ENCODE measurements at regions of chr6 and their contacts with region 1.

Region 1: GRCh38 chr6:36912586-36912985 is 26.8 kb downstream of the C6orf89 start:
- DNase-seq: peak; percentile 3 to 82 (median 48)
- ATAC-seq: peak; percentile 85
- H3K4me3 ChIP-seq: peak overlapping the region; percentile 15 to 16
- H3K4me3 Mint-ChIP-seq: peak overlapping the region; percentile 63
- H3K27ac ChIP-seq: peak overlapping the region; percentile 13 to 70
- H3K27ac Mint-ChIP-seq: peak overlapping the region; percentile 83
- H3K4me1 ChIP-seq: peaks cover 20% of the 10 kb centered on the region
- H3K4me1 Mint-ChIP-seq: peaks cover 26% of the 10 kb centered on the region
- H3K27me3 ChIP-seq: no peaks in the 10 kb centered on the region
- H3K27me3 Mint-ChIP-seq: no peaks in the 10 kb centered on the region
- CTCF ChIP-seq: no peak

Region 2: DNA sequence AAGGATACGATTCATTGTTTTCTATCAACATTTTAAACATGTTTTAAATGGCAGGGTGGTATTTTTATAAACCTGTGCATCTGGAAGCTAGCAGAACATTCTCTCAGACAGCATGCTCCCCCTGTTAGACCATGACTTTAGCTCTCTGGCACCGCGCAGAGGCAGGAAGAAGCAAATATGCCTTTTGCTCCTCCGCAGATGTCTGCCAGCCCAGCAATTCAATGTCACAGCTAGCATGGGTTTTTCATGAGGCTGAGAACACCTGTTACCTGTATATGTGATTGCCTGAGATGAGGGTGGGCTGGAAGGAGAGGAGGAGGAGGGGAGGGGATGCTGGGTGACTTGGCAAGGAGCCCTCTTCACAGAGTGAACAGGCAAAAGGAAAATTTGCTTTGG is 66.8 kb after region 1 on chr6:
- CTCF ChIA-PET with region 1: interaction called, 4 read pairs
- POLR2A ChIA-PET with region 1: no interaction called
- intact Hi-C with region 1: loop called in 1 of 2 experiments (anchors 10 kb)
- DNase-seq: peak in 4 of 9 experiments; percentile 33 to 66 (median 54)
- ATAC-seq: peak; percentile 78
- H3K4me3 ChIP-seq: no peak overlapping the region
- H3K4me3 Mint-ChIP-seq: no peak overlapping the region
- H3K27ac ChIP-seq: no peak overlapping the region
- H3K27ac Mint-ChIP-seq: peak overlapping the region; percentile 58
- H3K4me1 ChIP-seq: peaks cover 26% of the 10 kb centered on the region
- H3K4me1 Mint-ChIP-seq: peaks cover 25% of the 10 kb centered on the region
- H3K27me3 ChIP-seq: no peaks in the 10 kb centered on the region
- H3K27me3 Mint-ChIP-seq: no peaks in the 10 kb centered on the region
- CTCF ChIP-seq: peak; percentile 53